Dendritic cell treated with granulocyte-macrophage colony-stimulating factor and Interleukin-4, amounts not matched to agents 40 ng/mL and 50 ng/mL, for 4 days (primary cell): ENCODE measurements at regions of chr13 and their contacts with region 1.

Region 1: GRCh38 chr13:23579072-23579895 is 9.1 kb downstream of the TNFRSF19 start:
- H3K4me3 Mint-ChIP-seq: peak overlapping the region; percentile 80
- H3K27ac Mint-ChIP-seq: peak overlapping the region; percentile 70
- H3K4me1 Mint-ChIP-seq: no peaks in the 10 kb centered on the region
- H3K27me3 Mint-ChIP-seq: peaks cover 52% of the 10 kb centered on the region

Region 2: DNA sequence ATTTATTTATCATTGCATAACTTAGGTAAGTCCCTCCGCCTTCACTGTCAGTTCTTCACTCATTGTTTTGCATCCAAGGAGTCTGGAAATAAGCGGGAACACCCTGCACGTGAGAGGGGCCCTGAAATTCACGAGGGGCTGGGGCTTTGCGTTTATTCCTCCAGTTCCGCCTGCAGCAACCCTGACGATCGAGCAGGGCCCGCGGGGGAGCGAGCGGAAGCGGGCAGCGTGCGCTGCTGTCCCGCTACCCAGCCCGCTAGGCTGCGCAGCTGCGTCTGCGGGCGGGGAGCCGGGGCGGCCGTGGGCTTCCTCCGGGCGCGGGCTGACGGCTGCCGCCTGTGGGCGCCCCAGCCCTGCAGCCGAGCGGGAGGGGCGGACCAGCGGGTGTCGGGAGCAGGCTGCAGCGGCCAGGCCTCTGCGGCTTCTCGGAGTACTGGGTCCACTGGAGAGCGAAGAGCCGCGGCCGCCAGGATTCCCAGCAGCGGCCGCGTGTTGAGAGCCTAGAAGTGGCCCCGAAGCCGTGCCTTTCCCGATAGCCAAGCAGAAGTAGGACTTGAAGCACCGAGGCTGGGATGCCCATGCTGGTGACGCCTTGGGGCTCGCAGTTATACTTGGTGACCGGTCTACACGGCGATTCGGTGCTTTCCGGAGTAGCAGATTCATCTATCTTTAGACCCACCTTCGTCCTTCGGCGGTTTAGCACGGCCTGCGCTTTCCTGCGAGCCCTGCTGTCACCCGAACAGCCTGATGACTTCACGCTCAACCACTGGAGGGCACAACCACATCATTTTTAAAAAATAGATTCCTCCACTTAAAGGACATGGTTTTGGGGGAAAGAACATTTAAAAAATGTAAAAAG is 112.9 kb before region 1 on chr13:
- intact Hi-C with region 1: loop called (anchors 5 kb)
- H3K4me3 Mint-ChIP-seq: peak overlapping the region; percentile 74
- H3K27ac Mint-ChIP-seq: peak overlapping the region; percentile 31
- H3K4me1 Mint-ChIP-seq: peaks cover 33% of the 10 kb centered on the region
- H3K27me3 Mint-ChIP-seq: peaks cover 11% of the 10 kb centered on the region

Region 3: DNA sequence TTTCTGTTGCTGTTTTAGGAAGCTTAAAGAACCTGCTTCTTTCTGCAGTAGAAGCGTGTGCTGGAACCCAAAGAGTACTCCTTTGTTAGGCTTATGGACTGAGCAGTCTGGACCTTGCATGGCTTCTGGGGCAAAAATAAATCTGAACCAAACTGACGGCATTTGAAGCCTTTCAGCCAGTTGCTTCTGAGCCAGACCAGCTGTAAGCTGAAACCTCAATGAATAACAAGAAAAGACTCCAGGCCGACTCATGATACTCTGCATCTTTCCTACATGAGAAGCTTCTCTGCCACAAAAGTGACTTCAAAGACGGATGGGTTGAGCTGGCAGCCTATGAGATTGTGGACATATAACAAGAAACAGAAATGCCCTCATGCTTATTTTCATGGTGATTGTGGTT is 94.1 kb after region 1 on chr13:
- intact Hi-C with region 1: no loop called
- H3K4me3 Mint-ChIP-seq: no peak overlapping the region
- H3K27ac Mint-ChIP-seq: no peak overlapping the region
- H3K4me1 Mint-ChIP-seq: no peaks in the 10 kb centered on the region
- H3K27me3 Mint-ChIP-seq: no peaks in the 10 kb centered on the region

Region 4: GRCh38 chr13:24512197-24512907 is 933.1 kb after region 1 on chr13 and contains the start of gene PARP4:
- intact Hi-C with region 1: loop called (anchors 5 kb)
- H3K4me3 Mint-ChIP-seq: peak within 1 kb of the TSS; percentile 92
- H3K27ac Mint-ChIP-seq: peak within 1 kb of the TSS; percentile 99
- H3K4me1 Mint-ChIP-seq: peaks cover 30% of the 10 kb centered on the region
- H3K27me3 Mint-ChIP-seq: peaks cover 4% of the 10 kb centered on the region